ENCODE measurements at regions of chr10 and their contacts with region 1.

Region 1: DNA sequence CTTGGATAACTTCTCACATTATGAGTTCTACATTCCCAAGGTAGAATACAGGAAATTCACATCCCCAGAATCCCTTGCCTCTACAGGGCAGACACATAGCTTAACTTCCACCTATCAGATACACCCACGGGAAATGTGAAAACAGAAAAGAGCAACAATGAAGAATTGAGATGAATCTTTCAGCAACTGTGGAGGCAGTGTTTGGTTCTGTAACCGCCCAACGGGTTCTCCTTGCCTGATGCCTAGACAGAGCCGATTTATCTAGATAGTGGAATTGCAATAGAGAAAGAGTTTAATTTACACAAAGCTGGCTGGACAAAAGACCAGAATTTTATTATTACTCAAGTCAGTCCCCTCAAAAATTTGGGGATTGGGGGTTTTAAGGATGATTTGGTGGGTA is 138.8 kb downstream of the MTPAP start:
- DNase-seq: no peak
- ATAC-seq: no peak
- H3K4me3 ChIP-seq: no peak overlapping the region
- H3K27ac ChIP-seq: no peak overlapping the region
- H3K4me1 ChIP-seq: no peaks in the 10 kb centered on the region
- CTCF ChIP-seq: no peak
- EP300 ChIP-seq: no peak
- POLR2A ChIP-seq: no peak
- RAD21 ChIP-seq: no peak

Region 2: GRCh38 chr10:30199376-30200016 is 10.8 kb before region 1 on chr10:
- CTCF ChIA-PET with region 1: interaction called, 12 read pairs
- POLR2A ChIA-PET with region 1: no interaction called
- DNase-seq: no peak
- ATAC-seq: no peak
- H3K4me3 ChIP-seq: no peak overlapping the region
- H3K27ac ChIP-seq: no peak overlapping the region
- H3K4me1 ChIP-seq: no peaks in the 10 kb centered on the region
- CTCF ChIP-seq: no peak
- EP300 ChIP-seq: no peak
- POLR2A ChIP-seq: no peak
- RAD21 ChIP-seq: no peak

Region 3: DNA sequence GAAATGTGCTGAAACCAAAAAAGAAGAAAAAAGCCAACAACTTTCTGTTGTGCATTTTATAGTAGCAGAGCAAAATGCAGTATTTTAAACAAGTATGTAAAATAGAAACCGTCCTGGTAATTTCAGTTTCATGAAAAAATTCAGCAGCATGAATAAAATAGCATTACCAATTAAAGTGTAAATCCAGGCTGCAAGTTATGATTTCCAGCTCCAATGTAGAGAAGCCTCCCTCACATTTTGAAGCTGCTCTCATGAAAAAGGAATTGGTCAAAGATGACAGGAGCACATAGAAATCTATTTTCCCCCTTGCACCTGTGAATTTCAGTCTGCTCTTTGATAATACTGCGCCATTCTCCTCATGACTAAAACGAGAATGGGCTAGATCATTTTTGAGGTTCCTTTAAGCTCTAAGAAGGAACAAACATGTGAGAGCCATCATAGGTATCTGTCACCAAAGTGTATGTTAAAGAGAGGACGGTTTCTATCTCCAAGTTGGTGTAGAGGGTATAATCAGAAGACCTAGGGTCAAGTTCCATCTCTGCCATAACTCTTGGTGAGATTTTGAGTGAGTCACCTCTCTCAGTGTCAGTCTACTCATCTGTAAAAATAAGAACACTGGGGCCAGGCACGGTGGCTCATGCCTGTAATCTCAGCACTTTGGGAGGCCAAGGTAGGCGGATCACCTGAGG is 31.3 kb after region 1 on chr10:
- CTCF ChIA-PET with region 1: no interaction called
- POLR2A ChIA-PET with region 1: no interaction called
- DNase-seq: no peak
- ATAC-seq: no peak
- H3K4me3 ChIP-seq: no peak overlapping the region
- H3K27ac ChIP-seq: no peak overlapping the region
- H3K4me1 ChIP-seq: no peaks in the 10 kb centered on the region
- CTCF ChIP-seq: no peak
- EP300 ChIP-seq: no peak
- POLR2A ChIP-seq: no peak
- RAD21 ChIP-seq: no peak

Measured in A549 (cell line).